Heart left ventricle (tissue), 16 donors: ENCODE measurements at regions of chr5 and their contacts with region 1.

Region 1: DNA sequence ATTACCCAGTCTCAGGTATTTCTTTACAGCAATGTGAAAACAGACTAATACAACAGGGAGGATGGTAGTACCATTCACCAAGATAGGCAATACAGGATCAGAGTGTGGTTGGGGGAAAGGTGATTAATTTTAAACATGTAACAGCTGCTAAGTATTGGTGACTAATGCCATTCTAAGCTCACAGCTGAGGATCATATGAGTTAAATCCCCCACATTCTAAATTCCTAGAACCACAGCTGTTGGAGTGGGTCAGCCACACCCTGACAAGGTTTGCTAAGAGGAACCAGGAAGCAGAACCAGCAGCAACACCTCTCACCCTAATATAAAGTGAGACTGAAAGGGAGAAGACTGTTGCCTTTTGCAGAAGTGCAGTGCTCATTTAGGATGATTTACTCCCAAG is 24.8 kb downstream of the HSPB3 start:
- DNase-seq: no peak
- ATAC-seq: no peak
- H3K4me3 ChIP-seq: no peak overlapping the region
- H3K27ac ChIP-seq: no peak overlapping the region
- H3K4me1 ChIP-seq: peaks cover 0 to 2% (median 0%) of the 10 kb centered on the region in 12 donors
- H3K27me3 ChIP-seq: no peaks in the 10 kb centered on the region
- CTCF ChIP-seq: no peak
- POLR2A ChIP-seq: no peak

Region 2: DNA sequence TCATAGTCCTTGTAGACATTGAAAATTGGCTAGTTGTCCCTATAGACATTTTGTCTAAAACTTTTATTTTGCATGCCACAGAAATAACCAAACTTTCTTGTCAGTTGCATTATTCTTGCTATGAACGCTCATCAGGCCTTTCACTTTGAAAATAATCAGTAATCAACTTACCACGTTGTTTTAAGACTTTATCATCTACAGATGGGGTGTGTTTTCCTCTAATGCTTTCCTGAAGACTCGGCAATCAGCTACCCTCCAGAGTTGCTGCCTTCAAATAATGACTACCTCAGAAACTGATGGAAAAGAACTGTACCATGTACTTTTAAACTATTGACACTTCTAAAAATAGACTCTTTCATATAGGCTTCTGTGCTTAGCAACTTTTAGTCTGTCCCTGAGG is 58.3 kb before region 1 on chr5:
- intact Hi-C with region 1: loop called in 1 of 10 experiments (anchors 5 kb)
- DNase-seq: no peak
- ATAC-seq: no peak
- H3K4me3 ChIP-seq: no peak overlapping the region
- H3K27ac ChIP-seq: no peak overlapping the region
- H3K4me1 ChIP-seq: peaks cover 0 to 8% (median 0%) of the 10 kb centered on the region in 12 donors
- H3K27me3 ChIP-seq: no peaks in the 10 kb centered on the region
- CTCF ChIP-seq: no peak
- POLR2A ChIP-seq: no peak

Region 3: GRCh38 chr5:54443270-54443669 is 37.0 kb before region 1 on chr5:
- intact Hi-C with region 1: loop called in 3 of 10 experiments (anchors 5 to 10 kb)
- DNase-seq: no peak
- ATAC-seq: no peak
- H3K4me3 ChIP-seq: no peak overlapping the region
- H3K27ac ChIP-seq: no peak overlapping the region
- H3K4me1 ChIP-seq: peaks cover 0 to 30% (median 11%) of the 10 kb centered on the region in 12 donors
- H3K27me3 ChIP-seq: no peaks in the 10 kb centered on the region
- CTCF ChIP-seq: peak in 8 of 12 donors; percentile 23 to 55 (median 40)
- POLR2A ChIP-seq: no peak